Motor neuron (in vitro differentiated cells): ENCODE measurements at regions of chr4 and their contacts with region 1.

Region 1: DNA sequence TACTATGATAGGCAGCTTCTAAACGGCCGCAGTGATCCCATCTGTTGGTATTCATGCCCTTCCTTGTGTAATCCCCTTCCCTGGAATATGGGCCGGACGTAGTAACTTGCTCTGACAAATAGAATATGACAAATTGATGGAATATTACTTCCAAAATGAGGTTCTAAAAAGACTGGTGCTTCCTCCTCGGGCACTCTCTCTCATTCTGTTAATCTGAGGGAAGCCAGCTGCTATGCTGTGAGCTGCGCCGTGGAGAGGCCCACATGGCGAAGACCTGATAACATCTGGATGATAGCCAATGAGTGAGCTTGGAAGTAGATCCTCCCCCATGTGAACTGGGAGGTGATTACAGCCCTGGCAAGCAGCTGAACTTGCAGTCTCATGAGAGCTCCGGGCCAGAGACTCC is 27.2 kb upstream of the SLC25A4 start:
- ATAC-seq: peak in 4 of 8 experiments; percentile 4 to 84 (median 16)
- H3K4me3 ChIP-seq: no peak overlapping the region
- H3K27ac ChIP-seq: no peak overlapping the region
- H3K4me1 ChIP-seq: peaks cover 5 to 7% of the 10 kb centered on the region in 2 donors

Region 2: DNA sequence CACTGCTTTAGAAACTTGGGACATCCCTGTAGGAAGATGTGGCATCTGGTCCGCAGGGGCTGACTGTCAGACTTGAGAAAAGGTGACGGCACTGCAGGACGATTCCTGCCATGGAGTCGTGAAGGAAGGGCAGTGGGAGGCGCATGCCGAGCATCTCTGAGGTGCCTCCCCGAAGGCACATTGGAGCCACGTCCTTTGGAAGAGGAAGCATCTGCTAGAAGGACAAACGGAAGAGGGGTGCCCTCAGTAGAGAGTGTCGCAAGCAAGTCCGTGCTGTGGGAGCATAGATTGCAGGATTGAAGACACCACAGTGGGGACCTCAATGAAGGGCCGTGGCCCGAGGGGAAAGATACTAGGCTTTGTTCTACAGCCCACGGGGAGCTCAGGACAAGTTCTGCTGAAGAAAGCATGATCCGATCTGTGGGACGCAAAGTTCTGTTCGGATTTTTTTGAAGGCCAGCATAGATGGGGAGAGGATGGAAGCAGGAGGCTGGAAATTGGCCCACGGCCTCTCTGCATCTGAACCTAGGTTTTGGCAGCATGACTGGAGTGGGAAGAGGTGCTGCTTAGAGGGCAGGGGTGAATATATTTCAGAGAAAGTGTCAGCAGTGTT is 121.7 kb before region 1 on chr4:
- in situ Hi-C with region 1: no loop called
- ATAC-seq: no peak
- H3K4me3 ChIP-seq: no peak overlapping the region
- H3K27ac ChIP-seq: no peak overlapping the region
- H3K4me1 ChIP-seq: no peaks in the 10 kb centered on the region

Region 3: GRCh38 chr4:185005216-185005819 is 110.5 kb before region 1 on chr4:
- in situ Hi-C with region 1: loop called in 1 of 9 experiments (anchors 25 kb)
- ATAC-seq: peak; percentile 97 to 99 (median 98)
- H3K4me3 ChIP-seq: no peak overlapping the region
- H3K27ac ChIP-seq: no peak overlapping the region
- H3K4me1 ChIP-seq: no peaks in the 10 kb centered on the region